ENCODE measurements at regions of chr4 and their contacts with region 1.

Region 1: GRCh38 chr4:36244257-36245079 is at the start of gene ARAP2:
- DNase-seq: peak; percentile 93
- H3K4me3 Mint-ChIP-seq: peak within 1 kb of the TSS; percentile 87
- H3K27ac Mint-ChIP-seq: peak within 1 kb of the TSS; percentile 96
- H3K4me1 Mint-ChIP-seq: peaks cover 38% of the 10 kb centered on the region
- H3K27me3 Mint-ChIP-seq: peaks cover 7% of the 10 kb centered on the region
- total RNA-seq, gene ARAP2: 45.3 and 45.4 TPM in 2 replicates

Region 2: GRCh38 chr4:36187723-36188333 is 56.6 kb before region 1 on chr4:
- intact Hi-C with region 1: loop called (anchors 2 kb)
- DNase-seq: no peak
- H3K4me3 Mint-ChIP-seq: no peak overlapping the region
- H3K27ac Mint-ChIP-seq: no peak overlapping the region
- H3K4me1 Mint-ChIP-seq: peaks cover 26% of the 10 kb centered on the region
- H3K27me3 Mint-ChIP-seq: no peaks in the 10 kb centered on the region

Region 3: GRCh38 chr4:36208893-36209473 is 35.5 kb before region 1 on chr4:
- intact Hi-C with region 1: loop called (anchors 1 kb)
- DNase-seq: peak; percentile 72
- H3K4me3 Mint-ChIP-seq: peak overlapping the region; percentile 57
- H3K27ac Mint-ChIP-seq: peak overlapping the region; percentile 78
- H3K4me1 Mint-ChIP-seq: peaks cover 39% of the 10 kb centered on the region
- H3K27me3 Mint-ChIP-seq: no peaks in the 10 kb centered on the region

Region 4: DNA sequence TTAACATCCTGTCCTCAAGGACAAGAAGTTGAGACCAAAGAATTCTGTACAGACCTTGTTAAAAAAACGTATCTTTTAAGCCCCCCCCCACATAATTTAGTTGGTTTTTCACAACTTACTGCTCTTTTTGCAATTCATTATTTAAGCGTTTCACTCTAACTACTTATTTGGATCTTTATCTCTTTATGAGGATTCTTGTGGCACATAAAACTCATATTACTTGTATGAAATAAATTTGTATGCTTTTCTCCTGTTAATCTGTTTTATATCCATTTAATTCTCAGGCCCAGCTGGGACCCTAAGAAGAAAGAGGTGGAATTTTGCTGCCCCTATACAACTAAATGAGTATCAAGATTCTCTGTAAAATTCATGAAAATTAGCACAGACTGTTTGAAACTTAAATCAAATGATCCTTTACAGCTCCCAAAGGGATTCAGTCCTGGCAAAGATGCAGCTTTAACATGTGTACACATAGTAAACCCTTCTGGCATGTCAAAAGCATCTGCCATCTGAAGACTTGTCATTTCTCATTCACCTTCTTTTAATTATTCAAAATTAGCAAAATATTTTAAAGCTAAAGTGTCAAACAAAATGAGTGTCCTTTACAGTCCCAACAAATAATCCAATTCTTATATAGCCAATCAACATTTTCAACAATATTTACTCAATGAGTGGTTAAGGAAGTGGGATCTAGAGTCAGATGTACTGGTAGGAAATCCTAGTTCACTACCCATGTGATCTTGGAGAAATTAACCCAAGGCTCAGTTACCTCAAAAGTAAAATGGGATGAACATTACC is 17.8 kb before region 1 on chr4:
- intact Hi-C with region 1: loop called (anchors 2 kb)
- DNase-seq: no peak
- H3K4me3 Mint-ChIP-seq: no peak overlapping the region
- H3K27ac Mint-ChIP-seq: no peak overlapping the region
- H3K4me1 Mint-ChIP-seq: peaks cover 31% of the 10 kb centered on the region
- H3K27me3 Mint-ChIP-seq: no peaks in the 10 kb centered on the region

Region 5: GRCh38 chr4:36255577-36255976 is 11.1 kb after region 1 on chr4:
- intact Hi-C with region 1: loop called (anchors 1 kb)
- DNase-seq: peak; percentile 91
- H3K4me3 Mint-ChIP-seq: peak overlapping the region; percentile 70
- H3K27ac Mint-ChIP-seq: peak overlapping the region; percentile 91
- H3K4me1 Mint-ChIP-seq: peaks cover 28% of the 10 kb centered on the region
- H3K27me3 Mint-ChIP-seq: no peaks in the 10 kb centered on the region

Region 6: DNA sequence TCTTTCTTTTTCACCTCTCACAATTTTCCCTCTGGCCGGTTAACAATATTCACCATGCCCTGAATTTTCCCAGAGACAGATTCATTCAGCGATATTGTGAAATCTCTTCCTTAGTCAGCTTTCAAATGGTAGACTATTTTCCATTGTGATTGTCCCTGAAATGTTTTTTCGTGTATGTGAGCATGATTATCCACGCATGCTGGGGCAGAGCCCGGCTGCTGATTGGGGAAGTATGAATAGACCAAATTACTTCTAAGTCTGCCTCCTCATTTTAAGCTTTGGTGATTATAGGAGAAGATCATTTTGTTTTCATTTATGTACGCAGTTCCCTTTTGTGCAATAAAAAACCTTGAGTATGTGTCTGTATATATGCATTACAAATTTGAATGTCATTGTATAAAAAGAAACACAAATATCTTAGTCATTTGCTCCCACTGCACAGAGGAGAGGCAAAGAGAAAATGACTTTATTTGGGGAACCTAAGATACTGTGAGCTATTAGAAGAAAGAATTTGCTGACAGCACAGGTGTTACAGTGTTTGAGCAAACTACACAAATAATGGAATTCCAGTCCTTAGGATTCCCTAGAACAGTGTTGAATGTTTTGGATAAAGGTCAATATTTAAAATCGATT is 48.2 kb after region 1 on chr4:
- intact Hi-C with region 1: no loop called
- DNase-seq: no peak
- H3K4me3 Mint-ChIP-seq: no peak overlapping the region
- H3K27ac Mint-ChIP-seq: no peak overlapping the region
- H3K4me1 Mint-ChIP-seq: peaks cover 19% of the 10 kb centered on the region
- H3K27me3 Mint-ChIP-seq: peaks cover 3% of the 10 kb centered on the region

Region 7: DNA sequence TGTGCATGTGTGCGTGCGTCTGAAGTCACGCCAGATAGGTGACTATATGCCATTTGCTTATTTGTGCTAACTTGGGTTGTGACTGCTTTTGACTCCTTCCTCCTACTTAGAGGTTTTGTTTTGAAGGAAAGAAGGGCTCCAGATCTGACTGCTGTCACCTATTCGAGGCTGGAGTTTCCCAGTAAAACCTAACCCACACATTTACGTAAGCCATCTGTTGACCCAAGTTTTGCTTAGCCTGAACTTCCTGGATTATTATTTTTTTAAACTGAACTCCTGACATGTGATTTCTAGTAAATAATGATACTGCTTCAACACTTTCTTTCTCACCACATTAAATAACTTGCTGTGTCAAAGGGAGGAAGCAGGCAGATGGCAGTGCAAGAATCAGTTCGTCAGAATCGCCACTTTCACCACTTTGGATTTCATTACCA is 78.5 kb after region 1 on chr4:
- intact Hi-C with region 1: loop called (anchors 1 kb)
- DNase-seq: peak; percentile 90
- H3K4me3 Mint-ChIP-seq: peak overlapping the region; percentile 21
- H3K27ac Mint-ChIP-seq: peak overlapping the region; percentile 93
- H3K4me1 Mint-ChIP-seq: peaks cover 71% of the 10 kb centered on the region
- H3K27me3 Mint-ChIP-seq: no peaks in the 10 kb centered on the region

Region 8: DNA sequence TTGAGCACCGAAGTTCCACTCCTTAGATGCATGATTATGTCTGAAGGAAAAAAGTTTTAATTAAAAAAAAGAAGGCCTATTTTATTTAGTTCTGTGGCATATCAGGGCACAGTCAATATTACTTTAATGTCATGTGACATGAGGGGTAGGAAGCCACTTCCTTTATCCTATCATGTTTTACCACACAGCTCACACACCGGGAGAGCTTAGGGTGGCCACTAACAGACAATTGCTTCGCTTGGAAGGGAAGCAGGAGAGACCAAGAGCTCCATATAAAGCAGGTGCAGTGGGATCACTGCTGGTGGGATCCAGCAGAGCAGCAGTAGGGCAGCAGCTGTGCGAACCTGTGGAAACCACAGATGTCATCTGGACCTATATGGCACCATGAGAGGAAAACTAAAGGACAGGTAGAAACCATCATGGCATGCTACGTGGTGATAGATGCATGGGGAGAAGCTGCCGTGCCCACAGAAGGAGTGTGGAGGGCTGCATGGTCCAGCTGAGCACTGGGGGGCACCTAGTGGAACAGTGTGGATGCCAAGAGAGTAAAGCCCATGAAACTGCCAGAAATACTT is 88.9 kb after region 1 on chr4:
- intact Hi-C with region 1: no loop called
- DNase-seq: peak; percentile 58
- H3K4me3 Mint-ChIP-seq: no peak overlapping the region
- H3K27ac Mint-ChIP-seq: peak overlapping the region; percentile 48
- H3K4me1 Mint-ChIP-seq: peaks cover 28% of the 10 kb centered on the region
- H3K27me3 Mint-ChIP-seq: no peaks in the 10 kb centered on the region

Region 9: DNA sequence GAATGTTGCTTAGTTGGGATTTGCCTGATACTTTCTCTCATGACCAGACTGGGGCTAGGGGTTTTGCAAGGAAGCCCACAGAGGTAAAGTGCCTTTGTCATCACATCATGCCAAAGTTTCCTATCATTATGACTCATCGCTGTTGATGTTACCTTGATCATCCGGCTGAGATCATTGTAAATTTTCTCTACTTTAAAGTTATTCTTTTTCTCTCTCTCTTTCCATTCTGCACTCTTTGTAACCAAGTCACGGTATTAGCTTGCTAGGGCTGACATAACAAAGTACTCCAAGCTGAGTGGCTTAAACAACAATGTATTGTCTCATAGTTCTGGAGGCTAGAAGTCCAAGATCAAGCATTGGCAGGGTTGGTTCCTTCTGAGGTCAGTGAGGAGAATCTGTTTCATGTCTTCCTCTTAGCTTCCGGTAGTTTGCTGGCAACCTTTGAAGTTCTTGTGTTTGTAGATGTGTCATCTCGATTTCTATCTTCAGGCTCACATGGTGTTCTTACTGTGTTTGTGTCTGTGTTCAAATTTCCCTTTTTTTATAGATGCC is 150.0 kb after region 1 on chr4:
- intact Hi-C with region 1: loop called (anchors 1 kb)
- DNase-seq: peak; percentile 88
- H3K4me3 Mint-ChIP-seq: peak overlapping the region; percentile 70
- H3K27ac Mint-ChIP-seq: peak overlapping the region; percentile 97
- H3K4me1 Mint-ChIP-seq: peaks cover 23% of the 10 kb centered on the region
- H3K27me3 Mint-ChIP-seq: no peaks in the 10 kb centered on the region

Region 10: DNA sequence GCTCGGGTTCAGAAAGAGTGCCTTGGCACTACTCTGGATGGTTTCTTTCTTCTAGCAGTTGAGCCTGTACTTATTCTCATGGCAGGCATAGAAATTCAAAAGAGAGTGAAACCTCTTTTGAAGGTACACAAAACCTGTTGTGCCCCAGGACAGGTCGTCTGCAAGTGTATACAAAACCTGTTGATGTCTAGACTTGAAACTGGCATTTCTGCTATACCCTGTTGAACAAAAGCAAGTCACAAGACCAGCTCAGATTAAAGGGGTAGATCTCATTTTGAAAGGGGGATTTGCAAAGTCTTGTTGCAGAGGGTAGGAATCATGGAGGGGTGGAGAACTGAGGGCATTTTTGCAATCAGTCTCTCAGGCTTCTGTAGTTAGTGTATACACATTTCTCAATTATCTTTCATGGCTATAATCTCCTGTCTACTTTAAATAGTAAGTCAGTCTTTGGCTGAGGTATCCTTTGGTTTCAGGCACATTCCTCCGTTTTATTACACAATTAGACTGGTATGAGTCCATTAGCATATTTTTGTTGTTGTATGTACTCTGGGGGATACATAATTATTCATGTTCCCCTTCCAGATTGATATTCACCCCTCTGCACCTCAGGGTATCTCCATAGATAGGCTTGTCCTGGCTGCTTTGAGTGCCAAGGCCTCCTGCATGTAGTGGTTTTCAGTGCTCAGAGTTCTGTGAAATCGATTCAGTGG is 288.4 kb after region 1 on chr4:
- intact Hi-C with region 1: no loop called
- DNase-seq: no peak
- H3K4me3 Mint-ChIP-seq: no peak overlapping the region
- H3K27ac Mint-ChIP-seq: no peak overlapping the region
- H3K4me1 Mint-ChIP-seq: no peaks in the 10 kb centered on the region
- H3K27me3 Mint-ChIP-seq: no peaks in the 10 kb centered on the region

Measured in activated CD4-positive, alpha-beta T cell treated with anti-CD3 and anti-CD28 coated beads, Interleukin-2, amount 10 ng/mL, durations not matched to agents 24 days and 14 days (primary cell).